Dorsolateral prefrontal cortex (tissue), 120 donors: ENCODE measurements at regions of chr6 and their contacts with region 1.

Region 1: GRCh38 chr6:105402939-105403935 is at the start of gene PREP:
- DNase-seq: peak; percentile 60 to 91 (median 79)
- H3K4me3 ChIP-seq: peak within 1 kb of the TSS; percentile 65 to 98 (median 87)
- H3K27ac ChIP-seq: peak within 1 kb of the TSS in 58 of 59 donors; percentile 70 to 95 (median 87)
- H3K27me3 ChIP-seq: no peaks in the 10 kb centered on the region
- CTCF ChIP-seq: peak; percentile 51 to 87 (median 72)
- total RNA-seq, gene PREP: 17.2 to 55.8 (median 38.5) TPM

Region 2: GRCh38 chr6:105087571-105088211 is 315.5 kb before region 1 on chr6:
- intact Hi-C with region 1: loop called (anchors 2 to 10 kb)
- DNase-seq: peak in 4 of 10 donors; percentile 13 to 39 (median 29)
- H3K4me3 ChIP-seq: no peak overlapping the region
- H3K27ac ChIP-seq: no peak overlapping the region
- H3K27me3 ChIP-seq: no peaks in the 10 kb centered on the region
- CTCF ChIP-seq: peak; percentile 84 to 99 (median 93)

Region 3: DNA sequence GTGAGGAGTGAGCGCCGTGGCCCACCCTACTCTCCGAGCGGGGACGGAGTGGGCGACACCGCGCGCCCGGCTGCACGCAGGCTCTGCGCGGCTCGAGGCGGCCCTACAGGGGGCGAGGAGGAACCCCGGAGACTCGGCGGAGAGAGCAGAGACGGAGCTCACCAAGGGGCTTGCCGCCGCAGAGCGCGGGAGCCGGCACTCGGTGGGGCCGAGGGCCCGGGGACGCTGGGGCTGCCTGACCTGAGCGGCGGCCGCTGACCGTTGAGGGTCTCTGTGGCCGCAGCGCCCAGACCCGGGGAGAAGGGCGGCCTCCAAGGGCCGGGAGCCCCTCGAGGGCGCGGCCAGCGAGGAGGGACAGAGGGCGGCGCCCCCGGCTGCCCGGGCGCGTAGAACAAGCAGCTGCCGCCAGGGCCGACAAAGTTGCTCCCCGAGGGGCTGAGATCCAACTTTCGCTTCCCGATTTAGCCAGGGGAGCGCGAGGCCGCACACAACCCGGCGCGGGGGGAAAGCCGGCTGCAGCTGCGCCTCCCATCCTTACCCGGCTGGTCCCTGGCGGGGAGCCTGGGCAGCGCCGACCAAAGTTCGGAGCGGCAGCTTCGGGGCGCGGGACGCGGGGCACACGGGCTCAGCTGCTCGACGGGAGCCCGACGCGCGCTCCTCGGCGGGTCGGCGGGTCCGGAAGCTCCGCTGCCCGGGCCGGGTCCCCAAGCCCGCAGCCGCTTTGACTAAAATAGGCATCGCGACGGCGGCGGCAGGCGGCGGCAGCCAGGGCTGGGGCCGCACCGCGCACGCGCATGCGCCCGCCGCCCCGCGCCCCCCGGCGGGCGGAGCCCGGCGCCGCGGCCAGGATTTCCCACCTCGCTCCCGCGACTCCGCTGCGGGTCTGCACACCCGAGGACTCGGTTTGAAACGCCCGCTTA is 266.5 kb before region 1 on chr6:
- intact Hi-C with region 1: loop called in 1 of 2 experiments (anchors 2 kb)
- DNase-seq: peak; percentile 5 to 77 (median 46)
- H3K4me3 ChIP-seq: peak overlapping the region; percentile 58 to 94 (median 84)
- H3K27ac ChIP-seq: peak overlapping the region in 57 of 59 donors; percentile 36 to 96 (median 83)
- H3K27me3 ChIP-seq: peaks cover 0 to 7% (median 0%) of the 10 kb centered on the region in 45 donors
- CTCF ChIP-seq: peak in 31 of 56 donors; percentile 5 to 56 (median 29)

Region 4: DNA sequence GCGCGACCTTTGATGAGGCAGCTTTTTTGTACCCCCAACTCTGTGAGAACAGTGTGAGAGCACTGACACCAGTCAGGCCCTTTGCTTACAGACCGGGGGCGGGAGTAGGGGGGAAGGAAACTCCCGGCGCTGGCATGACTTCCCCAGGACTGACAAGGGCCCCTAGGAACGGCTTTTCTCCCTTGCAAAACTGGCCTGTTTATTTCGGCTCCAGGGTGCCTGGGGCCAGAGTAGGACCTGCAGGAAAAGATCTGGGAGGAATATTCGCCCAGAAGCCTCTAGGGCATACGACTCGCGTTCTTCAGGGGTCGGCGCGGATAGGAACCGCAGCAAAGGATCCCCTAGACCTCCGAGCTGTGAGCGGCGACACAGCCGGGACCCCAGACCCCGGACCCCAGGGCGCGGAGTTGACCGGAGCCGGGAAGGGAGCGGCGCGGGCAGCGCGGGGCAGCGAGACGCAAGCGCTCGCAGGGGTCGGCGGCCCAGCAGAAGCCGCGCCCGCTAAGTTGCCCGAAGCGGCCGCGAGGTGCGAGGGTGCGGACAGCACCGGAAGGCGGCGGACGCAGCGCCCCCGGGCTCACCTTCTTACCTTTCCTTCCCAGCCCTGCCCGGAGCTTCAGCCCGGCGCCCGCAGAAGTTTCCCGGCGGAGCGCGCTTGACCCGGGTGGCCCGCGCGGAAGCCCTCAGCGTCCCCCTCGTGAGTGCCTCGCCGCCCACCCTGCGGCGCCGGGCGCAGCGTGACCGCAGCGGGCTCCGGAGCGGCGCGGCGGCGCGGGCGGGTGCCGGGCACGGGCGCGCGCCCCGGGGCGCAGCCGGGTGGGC is 223.8 kb before region 1 on chr6 and contains the start of gene POPDC3:
- intact Hi-C with region 1: loop called in 1 of 2 experiments (anchors 5 kb)
- DNase-seq: peak in 6 of 10 donors; percentile 22 to 58 (median 50)
- H3K4me3 ChIP-seq: peak within 1 kb of the TSS; percentile 52 to 82 (median 73)
- H3K27ac ChIP-seq: peak within 1 kb of the TSS; percentile 58 to 96 (median 92)
- H3K27me3 ChIP-seq: peaks cover 0 to 7% (median 0%) of the 10 kb centered on the region in 45 donors
- CTCF ChIP-seq: peak in 2 of 56 donors; percentile 18
- total RNA-seq, gene POPDC3: 8.8 to 27.8 (median 19.1) TPM

Region 5: DNA sequence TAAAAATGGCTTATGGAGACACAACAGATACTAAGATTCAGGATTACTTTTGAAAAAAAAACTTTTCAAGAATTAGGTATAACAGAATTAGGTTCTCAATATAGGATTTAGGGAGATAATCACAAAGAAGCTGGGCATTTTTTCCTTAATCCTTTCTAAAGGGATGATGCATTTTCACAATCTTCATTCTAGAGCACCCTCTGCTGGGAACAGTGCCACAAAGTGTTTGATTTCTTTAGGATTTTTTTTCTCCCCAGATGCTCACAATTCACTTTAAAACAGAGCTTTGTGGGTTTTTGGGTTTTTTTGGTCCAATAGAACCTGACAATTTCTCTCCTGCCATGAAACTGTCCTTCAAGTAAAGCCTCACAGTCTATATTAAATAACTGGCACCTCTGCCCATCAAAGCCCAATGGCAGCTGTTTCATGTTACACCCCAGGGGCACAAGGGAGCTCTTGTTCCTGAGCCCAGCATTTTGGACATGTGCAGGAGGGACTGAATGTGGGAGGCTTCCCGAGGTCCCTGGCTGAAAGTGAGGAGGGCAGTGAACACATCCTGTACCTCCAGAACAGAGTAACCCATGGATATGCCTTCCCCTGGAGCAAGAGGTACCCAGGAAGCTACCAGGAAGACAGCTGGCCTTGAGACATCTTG is 40.0 kb before region 1 on chr6:
- intact Hi-C with region 1: loop called (anchors 2 to 5 kb)
- DNase-seq: peak in 1 of 10 donors; percentile 42
- H3K4me3 ChIP-seq: no peak overlapping the region
- H3K27ac ChIP-seq: peak overlapping the region in 50 of 59 donors; percentile 3 to 88 (median 62)
- H3K27me3 ChIP-seq: no peaks in the 10 kb centered on the region
- CTCF ChIP-seq: peak in 53 of 56 donors; percentile 35 to 78 (median 59)